Endothelial cell of umbilical vein (primary cell): ENCODE measurements at regions of chr2 and their contacts with region 1.

Region 1: DNA sequence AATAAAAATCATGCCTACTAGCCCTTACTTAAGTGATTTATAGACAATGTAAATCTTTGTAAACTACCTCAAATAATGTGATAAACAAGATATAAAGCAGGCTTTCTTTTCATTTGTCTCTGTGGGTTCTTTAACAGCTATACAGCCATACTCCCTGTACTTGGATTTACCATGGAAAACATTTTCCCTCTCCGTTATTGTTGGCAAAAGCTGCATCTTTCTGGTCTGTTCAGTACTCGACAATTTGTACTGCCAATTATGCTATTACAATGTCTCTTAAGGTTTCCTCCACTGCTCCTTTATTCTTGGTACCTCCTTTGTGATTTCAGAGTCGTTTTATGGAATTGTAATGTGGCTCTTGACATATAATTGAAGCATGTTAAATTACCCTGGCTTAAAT is 426.3 kb upstream of the PKDCC start:
- DNase-seq: no peak
- H3K4me3 ChIP-seq: no peak overlapping the region
- H3K27ac ChIP-seq: no peak overlapping the region
- H3K4me1 ChIP-seq: no peaks in the 10 kb centered on the region
- H3K27me3 ChIP-seq: no peaks in the 10 kb centered on the region
- CTCF ChIP-seq: no peak
- POLR2A ChIP-seq: no peak

Region 2: DNA sequence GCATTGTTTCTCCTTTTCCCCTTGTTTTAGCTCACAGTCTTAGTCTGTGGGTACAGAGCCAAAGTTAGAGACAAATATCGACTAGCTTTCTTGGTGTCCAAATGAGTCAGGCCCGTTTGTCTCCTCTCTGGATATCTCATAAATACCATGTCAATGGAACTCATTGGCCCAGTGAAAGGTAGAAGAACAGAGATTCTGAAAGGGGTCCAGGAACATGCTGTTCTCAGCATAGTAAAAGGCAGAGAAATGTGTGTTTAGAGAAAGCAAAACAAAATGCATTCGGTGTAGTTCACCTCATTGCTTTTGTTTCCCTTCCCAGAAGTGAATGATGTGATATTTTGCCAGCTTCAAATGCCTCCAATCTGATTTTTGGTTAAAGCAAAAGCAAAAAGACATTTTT is 931.0 kb before region 1 on chr2:
- CTCF ChIA-PET with region 1: no interaction called
- POLR2A ChIA-PET with region 1: no interaction called
- dilution Hi-C with region 1: no loop called
- intact Hi-C with region 1: loop called (anchors 2 kb)
- DNase-seq: no peak
- H3K4me3 ChIP-seq: no peak overlapping the region
- H3K27ac ChIP-seq: no peak overlapping the region
- H3K4me1 ChIP-seq: no peaks in the 10 kb centered on the region
- H3K27me3 ChIP-seq: no peaks in the 10 kb centered on the region
- CTCF ChIP-seq: no peak
- POLR2A ChIP-seq: no peak